ENCODE measurements at regions of chr22 and their contacts with region 1.

Region 1: DNA sequence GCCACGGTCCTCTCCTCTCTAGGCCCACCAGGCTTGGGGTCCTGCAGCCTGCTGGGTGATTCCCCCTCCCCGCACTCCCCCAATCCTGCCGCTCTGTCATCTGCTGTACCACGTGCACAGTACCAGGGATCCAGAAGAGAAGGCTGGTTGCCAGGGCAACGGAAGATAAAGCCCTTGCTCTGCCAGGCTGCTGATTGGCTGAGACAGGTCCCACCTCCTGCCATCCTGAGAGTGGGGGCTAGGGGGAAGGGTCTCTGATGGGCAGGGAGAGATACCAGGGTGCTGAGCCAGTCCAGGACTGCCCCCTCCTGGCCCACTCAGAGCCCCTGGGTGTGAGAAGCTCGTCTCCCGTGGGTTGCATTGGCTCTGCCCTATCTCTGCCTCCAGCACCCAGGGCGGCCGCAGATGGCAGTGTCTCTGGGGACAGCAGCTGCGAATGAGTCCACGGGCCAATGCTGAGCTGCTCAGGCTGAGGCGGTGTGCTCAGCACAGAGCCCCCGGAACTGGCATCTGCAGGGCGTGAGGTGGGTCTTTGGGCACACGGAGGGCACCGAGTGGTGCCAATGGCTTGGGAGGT is at the start of gene SMIM45:
- DNase-seq: no peak
- H3K4me3 ChIP-seq: no peak within 1 kb of the TSS
- H3K27ac ChIP-seq: no peak within 1 kb of the TSS
- H3K4me1 ChIP-seq: no peaks in the 10 kb centered on the region
- H3K27me3 ChIP-seq: no peaks in the 10 kb centered on the region
- CTCF ChIP-seq: no peak

Region 2: DNA sequence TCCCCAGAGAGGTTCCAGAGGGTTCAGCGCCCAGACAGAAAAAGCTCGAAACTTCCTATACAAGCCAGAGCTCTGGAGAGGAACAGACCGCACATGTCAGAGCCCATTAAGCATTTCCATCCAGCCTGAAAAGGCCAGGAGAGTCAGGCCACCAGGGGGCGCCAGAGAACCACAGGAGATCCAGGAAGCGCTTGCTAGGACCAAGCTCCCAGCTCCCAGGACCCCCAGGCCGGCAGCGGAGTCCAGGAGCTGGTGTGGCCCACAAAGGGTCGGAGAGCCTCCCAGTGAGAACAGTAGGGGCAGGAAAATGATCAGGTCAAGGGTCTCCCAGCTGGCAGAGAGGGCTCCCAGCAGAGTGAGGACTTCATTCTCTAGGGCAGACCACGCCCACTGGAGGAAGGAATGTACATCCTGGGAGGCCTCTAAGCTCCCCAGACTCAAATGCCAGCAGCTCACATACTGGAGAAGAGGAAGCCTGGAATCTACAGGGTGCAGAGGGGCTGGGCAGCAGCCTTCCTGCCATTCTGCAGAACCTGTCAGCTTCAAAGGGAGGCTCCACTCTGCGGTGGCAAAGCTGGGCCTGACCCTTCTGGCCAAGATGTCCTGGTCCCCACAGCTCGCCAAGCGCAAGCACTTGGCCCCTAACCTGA is 254.7 kb before region 1 on chr22:
- CTCF ChIA-PET with region 1: interaction called, 5 read pairs
- dilution Hi-C with region 1: loop called (anchors 10 kb)
- in situ Hi-C with region 1: no loop called
- intact Hi-C with region 1: loop called (anchors 1 kb)
- DNase-seq: peak; percentile 64
- H3K4me3 ChIP-seq: peak overlapping the region in 1 of 3 experiments; percentile 28
- H3K27ac ChIP-seq: no peak overlapping the region
- H3K4me1 ChIP-seq: peaks cover 17% of the 10 kb centered on the region
- H3K27me3 ChIP-seq: no peaks in the 10 kb centered on the region
- CTCF ChIP-seq: peak; percentile 88 to 98

Region 3: DNA sequence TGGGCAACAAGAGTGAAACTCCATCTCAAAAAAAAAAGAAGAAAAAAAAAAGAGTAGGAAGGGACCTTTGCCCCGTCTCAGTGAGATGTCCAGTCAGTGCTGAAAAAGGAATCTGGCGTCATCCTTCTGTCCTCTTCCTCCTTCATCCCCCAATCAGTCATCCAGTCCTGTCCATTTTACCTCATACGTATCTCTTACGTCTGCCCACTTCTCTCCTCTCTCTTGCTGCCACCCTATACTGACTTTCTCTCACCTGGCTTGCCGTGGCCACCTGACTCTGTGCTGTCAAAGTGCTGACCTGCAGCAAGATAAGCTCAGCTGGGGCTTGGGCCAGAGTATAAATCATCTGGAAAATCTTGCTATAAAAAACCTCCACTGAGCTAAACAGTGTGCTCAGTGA is 30.9 kb after region 1 on chr22:
- CTCF ChIA-PET with region 1: interaction called, 25 read pairs
- dilution Hi-C with region 1: no loop called
- in situ Hi-C with region 1: no loop called
- intact Hi-C with region 1: no loop called
- DNase-seq: no peak
- H3K4me3 ChIP-seq: no peak overlapping the region
- H3K27ac ChIP-seq: no peak overlapping the region
- H3K4me1 ChIP-seq: peaks cover 11% of the 10 kb centered on the region
- H3K27me3 ChIP-seq: peaks cover under 1% of the 10 kb centered on the region
- CTCF ChIP-seq: no peak

Region 4: GRCh38 chr22:41995211-41995610 is 43.2 kb after region 1 on chr22:
- CTCF ChIA-PET with region 1: no interaction called
- dilution Hi-C with region 1: no loop called
- in situ Hi-C with region 1: no loop called
- intact Hi-C with region 1: no loop called
- DNase-seq: no peak
- H3K4me3 ChIP-seq: no peak overlapping the region
- H3K27ac ChIP-seq: no peak overlapping the region
- H3K4me1 ChIP-seq: no peaks in the 10 kb centered on the region
- H3K27me3 ChIP-seq: no peaks in the 10 kb centered on the region
- CTCF ChIP-seq: no peak

Region 5: GRCh38 chr22:42412744-42413333 is 460.9 kb after region 1 on chr22:
- CTCF ChIA-PET with region 1: interaction called, 21 read pairs
- dilution Hi-C with region 1: no loop called
- in situ Hi-C with region 1: no loop called
- intact Hi-C with region 1: no loop called
- DNase-seq: no peak
- H3K4me3 ChIP-seq: no peak overlapping the region
- H3K27ac ChIP-seq: no peak overlapping the region
- H3K4me1 ChIP-seq: no peaks in the 10 kb centered on the region
- H3K27me3 ChIP-seq: no peaks in the 10 kb centered on the region
- CTCF ChIP-seq: no peak

Region 6: DNA sequence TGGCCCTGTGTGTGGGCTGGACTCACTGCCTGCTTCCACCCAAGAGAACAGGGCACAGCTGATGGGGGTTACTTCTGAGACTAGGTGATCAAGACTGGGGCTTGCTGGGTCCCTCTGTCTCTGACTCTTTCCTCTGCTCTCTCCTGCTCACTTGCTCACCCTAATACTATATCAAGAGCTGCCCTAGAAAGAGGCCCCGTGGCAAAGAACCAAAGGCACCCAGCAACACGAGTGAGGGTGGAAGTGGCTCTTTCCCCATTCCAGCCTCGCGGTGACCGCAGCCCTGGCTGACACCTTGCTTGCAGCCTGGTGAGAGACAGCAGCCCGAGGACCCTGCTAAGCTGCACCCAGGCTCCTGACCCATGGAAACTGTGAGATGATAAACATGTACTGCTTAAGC is 500.9 kb after region 1 on chr22:
- CTCF ChIA-PET with region 1: interaction called, 10 read pairs
- dilution Hi-C with region 1: no loop called
- in situ Hi-C with region 1: no loop called
- intact Hi-C with region 1: no loop called
- DNase-seq: no peak
- H3K4me3 ChIP-seq: no peak overlapping the region
- H3K27ac ChIP-seq: no peak overlapping the region
- H3K4me1 ChIP-seq: no peaks in the 10 kb centered on the region
- H3K27me3 ChIP-seq: peaks cover 2% of the 10 kb centered on the region
- CTCF ChIP-seq: no peak